ENCODE measurements at regions of chr17 and their contacts with region 1.

Region 1: DNA sequence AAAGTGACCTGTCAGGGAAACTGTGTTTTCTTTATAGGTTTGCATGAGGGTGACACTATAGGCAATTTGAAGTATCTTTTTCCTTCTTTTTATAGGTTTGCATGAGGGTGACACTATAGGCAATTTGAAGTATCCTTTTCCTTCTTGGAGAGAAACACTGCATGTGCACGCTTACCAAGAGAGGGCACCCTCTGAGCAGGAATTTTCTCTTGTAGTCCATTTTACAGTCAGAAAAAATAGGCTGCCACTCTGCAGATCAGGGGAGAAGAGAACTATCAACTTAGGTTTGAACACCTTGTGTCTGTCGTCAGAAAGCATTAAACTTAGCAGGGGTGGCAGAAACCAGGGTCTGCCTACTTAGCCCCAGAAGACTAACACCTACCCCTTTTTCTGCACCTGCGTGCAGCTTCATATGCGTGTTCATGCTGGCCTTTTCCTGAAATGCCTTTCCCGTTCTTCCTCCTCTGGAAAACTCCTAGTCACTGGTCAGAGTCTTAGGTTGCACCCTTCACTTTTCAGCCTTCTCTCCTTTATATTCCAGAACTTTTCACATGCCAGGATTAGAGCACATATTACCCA is 16.4 kb upstream of the SMIM36 start:
- DNase-seq: peak; percentile 48
- ATAC-seq: no peak
- H3K4me3 Mint-ChIP-seq: no peak overlapping the region
- H3K27ac Mint-ChIP-seq: no peak overlapping the region
- H3K4me1 Mint-ChIP-seq: peaks cover 5% of the 10 kb centered on the region
- H3K27me3 Mint-ChIP-seq: peaks cover 20% of the 10 kb centered on the region

Region 2: DNA sequence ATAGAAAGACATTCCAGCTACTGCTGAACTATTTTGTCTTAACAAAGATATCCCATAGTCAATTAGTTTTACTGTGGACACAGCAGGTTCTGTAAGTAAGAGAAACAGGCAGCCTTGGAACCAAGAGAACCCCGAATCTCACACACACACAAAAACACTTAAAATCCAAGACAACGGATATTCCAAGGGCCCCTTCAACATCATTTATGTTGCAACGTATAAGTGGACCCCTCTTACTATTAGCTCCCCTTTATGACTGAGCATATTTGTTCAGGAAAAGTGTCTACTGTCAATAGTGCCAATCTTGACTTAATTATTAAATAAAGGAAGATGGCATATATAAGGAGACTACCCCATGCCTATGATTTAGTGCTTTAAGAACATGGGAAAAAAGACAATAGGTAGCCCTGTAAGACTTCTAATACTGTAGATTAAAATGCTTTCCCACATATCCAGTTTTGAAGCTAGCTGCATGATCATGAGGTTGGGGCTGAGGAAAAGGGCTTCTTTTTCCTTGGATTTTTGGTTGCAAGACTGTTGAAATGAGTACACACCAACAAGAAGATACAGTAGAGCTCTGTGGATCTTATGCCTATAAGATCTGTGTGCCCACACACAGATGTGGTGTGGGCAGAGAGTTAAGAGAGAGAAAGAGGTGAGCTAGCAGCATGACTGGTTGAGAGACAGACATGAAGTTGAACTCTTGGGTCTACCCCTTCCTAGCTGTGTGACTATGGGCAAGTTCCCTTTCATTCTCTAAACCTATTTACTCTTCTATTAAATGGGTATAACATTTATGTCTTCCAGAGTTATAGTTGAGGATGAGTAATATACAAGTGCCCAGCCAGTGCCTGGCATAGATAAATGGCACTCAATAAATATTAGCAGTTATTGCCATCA is 109.0 kb before region 1 on chr17:
- CTCF ChIA-PET with region 1: no interaction called
- POLR2A ChIA-PET with region 1: no interaction called
- intact Hi-C with region 1: no loop called
- DNase-seq: no peak
- ATAC-seq: no peak
- H3K4me3 Mint-ChIP-seq: no peak overlapping the region
- H3K27ac Mint-ChIP-seq: peak overlapping the region; percentile 89
- H3K4me1 Mint-ChIP-seq: peaks cover 44% of the 10 kb centered on the region
- H3K27me3 Mint-ChIP-seq: peaks cover 4% of the 10 kb centered on the region

Region 3: GRCh38 chr17:55585629-55586028 is 58.0 kb after region 1 on chr17:
- CTCF ChIA-PET with region 1: interaction called, 8 read pairs
- POLR2A ChIA-PET with region 1: no interaction called
- intact Hi-C with region 1: loop called (anchors 1 kb)
- DNase-seq: no peak
- ATAC-seq: peak; percentile 55
- H3K4me3 Mint-ChIP-seq: no peak overlapping the region
- H3K27ac Mint-ChIP-seq: no peak overlapping the region
- H3K4me1 Mint-ChIP-seq: peaks cover 23% of the 10 kb centered on the region
- H3K27me3 Mint-ChIP-seq: peaks cover 13% of the 10 kb centered on the region

Region 4: GRCh38 chr17:55641676-55642081 is 114.0 kb after region 1 on chr17:
- CTCF ChIA-PET with region 1: interaction called, 20 read pairs
- POLR2A ChIA-PET with region 1: no interaction called
- intact Hi-C with region 1: loop called (anchors 1 kb)
- DNase-seq: peak; percentile 72
- ATAC-seq: peak; percentile 65
- H3K4me3 Mint-ChIP-seq: no peak overlapping the region
- H3K27ac Mint-ChIP-seq: no peak overlapping the region
- H3K4me1 Mint-ChIP-seq: no peaks in the 10 kb centered on the region
- H3K27me3 Mint-ChIP-seq: peaks cover 10% of the 10 kb centered on the region

Region 5: DNA sequence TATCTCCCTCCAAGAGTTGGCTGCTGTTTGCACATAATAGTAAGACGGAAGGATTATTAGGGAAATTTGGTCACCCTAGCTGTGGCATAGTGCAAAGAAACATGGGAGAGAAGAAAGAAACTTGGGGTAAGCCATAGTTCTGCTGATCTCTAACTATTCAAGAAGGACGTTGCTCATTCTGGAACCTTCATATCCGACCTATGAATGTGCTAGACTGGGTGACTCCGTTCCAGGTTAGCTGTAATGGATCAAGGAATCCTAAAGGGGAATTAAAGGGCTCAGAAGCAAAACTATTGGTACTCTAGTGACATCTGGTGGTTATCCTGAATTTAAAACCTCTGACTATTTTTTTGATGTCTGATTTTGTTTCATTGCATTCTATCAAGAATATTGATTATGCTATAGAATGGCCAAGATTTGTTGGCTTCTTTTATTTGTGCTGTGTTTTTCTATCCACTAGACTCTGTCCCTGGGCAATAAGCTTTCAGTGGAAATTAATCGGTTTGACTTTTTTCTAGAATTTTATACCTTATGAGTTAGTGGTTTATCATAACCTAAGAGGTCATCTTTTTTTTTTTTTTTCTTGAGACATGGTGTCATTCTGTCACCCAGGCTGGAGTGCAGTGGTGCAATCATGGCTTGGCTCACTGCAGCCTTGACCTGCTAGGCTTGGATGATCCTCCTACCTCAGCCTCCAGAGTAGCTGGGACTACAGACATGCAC is 242.7 kb after region 1 on chr17:
- CTCF ChIA-PET with region 1: interaction called, 30 read pairs
- POLR2A ChIA-PET with region 1: no interaction called
- intact Hi-C with region 1: loop called (anchors 1 kb)
- DNase-seq: no peak
- ATAC-seq: no peak
- H3K4me3 Mint-ChIP-seq: no peak overlapping the region
- H3K27ac Mint-ChIP-seq: no peak overlapping the region
- H3K4me1 Mint-ChIP-seq: no peaks in the 10 kb centered on the region
- H3K27me3 Mint-ChIP-seq: no peaks in the 10 kb centered on the region

Region 6: DNA sequence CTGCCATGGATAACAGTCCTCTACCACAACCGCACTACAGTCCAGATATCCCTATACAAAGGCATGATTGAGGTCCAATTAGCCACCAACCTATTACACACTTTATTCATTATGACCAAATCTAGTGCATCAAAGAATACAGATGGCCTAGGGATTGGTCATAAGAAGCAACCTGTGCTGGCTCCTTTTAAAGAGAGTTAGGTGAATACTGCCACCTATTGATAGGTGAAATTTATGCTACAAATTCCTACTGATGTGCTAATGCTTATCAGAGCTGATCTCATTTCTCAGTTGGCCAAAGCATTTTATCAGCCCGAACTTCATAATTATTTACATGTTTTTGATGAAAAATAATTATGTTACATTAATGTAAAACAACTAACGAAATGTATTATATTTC is 791.9 kb after region 1 on chr17:
- CTCF ChIA-PET with region 1: interaction called, 3 read pairs
- POLR2A ChIA-PET with region 1: no interaction called
- intact Hi-C with region 1: loop called in 1 of 2 experiments (anchors 1 kb)
- DNase-seq: no peak
- ATAC-seq: peak; percentile 66
- H3K4me3 Mint-ChIP-seq: no peak overlapping the region
- H3K27ac Mint-ChIP-seq: no peak overlapping the region
- H3K4me1 Mint-ChIP-seq: no peaks in the 10 kb centered on the region
- H3K27me3 Mint-ChIP-seq: no peaks in the 10 kb centered on the region